Endothelial cell of umbilical vein (primary cell): ENCODE measurements at regions of chr1 and their contacts with region 1.

Region 1: DNA sequence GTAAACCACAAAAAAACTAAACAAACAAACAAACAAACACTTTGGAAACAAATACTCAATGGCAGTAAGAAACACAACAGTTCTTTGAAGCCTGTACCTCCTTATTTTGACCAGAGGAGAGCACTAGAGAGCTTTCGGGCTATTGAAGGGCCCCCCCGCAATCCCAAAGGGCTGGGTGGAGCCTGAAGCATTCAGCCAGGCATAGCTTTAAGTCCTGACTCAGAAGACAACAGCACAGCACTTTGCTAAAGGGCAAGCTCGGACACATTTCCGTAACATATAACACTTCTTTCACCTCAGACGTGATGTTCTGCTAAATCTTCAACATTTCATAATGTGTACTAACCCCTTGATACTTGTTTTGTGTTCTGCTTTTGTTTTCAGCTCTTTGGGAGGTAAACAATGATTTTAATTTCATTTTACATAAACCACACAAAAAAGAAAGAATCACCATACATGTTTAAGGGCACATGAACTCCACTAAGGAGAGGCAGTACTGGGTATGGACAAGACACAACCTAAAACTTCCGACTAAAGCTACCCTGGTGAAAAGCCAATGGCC is 9.7 kb upstream of the SHCBP1L start:
- DNase-seq: peak; percentile 91
- H3K4me3 ChIP-seq: peak overlapping the region in 2 of 3 experiments; percentile 7 to 60
- H3K27ac ChIP-seq: peak overlapping the region; percentile 73
- H3K4me1 ChIP-seq: peaks cover 6% of the 10 kb centered on the region
- H3K27me3 ChIP-seq: no peaks in the 10 kb centered on the region
- CTCF ChIP-seq: peak; percentile 83 to 86
- POLR2A ChIP-seq: peak; percentile 63

Region 2: GRCh38 chr1:183023601-183024316 is 61.1 kb after region 1 on chr1:
- CTCF ChIA-PET with region 1: interaction called, 49 read pairs
- POLR2A ChIA-PET with region 1: interaction called, 4 read pairs
- dilution Hi-C with region 1: no loop called
- intact Hi-C with region 1: loop called (anchors 1 kb)
- DNase-seq: peak; percentile 78
- H3K4me3 ChIP-seq: peak overlapping the region; percentile 71 to 96 (median 96)
- H3K27ac ChIP-seq: peak overlapping the region; percentile 68
- H3K4me1 ChIP-seq: peaks cover 44% of the 10 kb centered on the region
- H3K27me3 ChIP-seq: no peaks in the 10 kb centered on the region
- CTCF ChIP-seq: peak; percentile 41 to 76
- POLR2A ChIP-seq: no peak

Region 3: DNA sequence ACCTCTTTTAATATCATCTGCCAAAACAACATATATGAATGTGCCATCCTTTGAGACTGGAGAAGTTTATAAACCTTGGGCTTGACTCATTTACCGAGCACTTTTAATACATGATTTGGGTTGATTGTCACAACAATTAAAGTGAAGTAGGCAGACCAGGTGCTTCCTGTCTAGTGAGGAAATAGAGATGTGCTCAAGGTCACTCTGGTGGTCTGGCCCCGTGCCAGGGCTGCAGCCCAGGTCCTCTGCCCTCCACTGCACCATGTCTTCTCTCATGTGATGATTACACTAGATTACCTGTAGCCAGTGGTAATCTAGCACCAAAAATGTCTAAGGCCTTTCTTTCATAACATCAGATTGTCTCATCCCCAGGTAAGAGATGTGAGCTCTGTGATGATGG is 161.6 kb after region 1 on chr1:
- CTCF ChIA-PET with region 1: interaction called, 13 read pairs
- POLR2A ChIA-PET with region 1: no interaction called
- dilution Hi-C with region 1: no loop called
- intact Hi-C with region 1: loop called (anchors 1 kb)
- DNase-seq: peak; percentile 55
- H3K4me3 ChIP-seq: no peak overlapping the region
- H3K27ac ChIP-seq: peak overlapping the region; percentile 19
- H3K4me1 ChIP-seq: peaks cover 10% of the 10 kb centered on the region
- H3K27me3 ChIP-seq: no peaks in the 10 kb centered on the region
- CTCF ChIP-seq: no peak
- POLR2A ChIP-seq: no peak

Region 4: GRCh38 chr1:183227963-183228649 is 265.5 kb after region 1 on chr1:
- CTCF ChIA-PET with region 1: interaction called, 47 read pairs
- POLR2A ChIA-PET with region 1: no interaction called
- dilution Hi-C with region 1: no loop called
- intact Hi-C with region 1: loop called (anchors 1 kb)
- DNase-seq: peak; percentile 54
- H3K4me3 ChIP-seq: no peak overlapping the region
- H3K27ac ChIP-seq: no peak overlapping the region
- H3K4me1 ChIP-seq: peaks cover 13% of the 10 kb centered on the region
- H3K27me3 ChIP-seq: no peaks in the 10 kb centered on the region
- CTCF ChIP-seq: peak; percentile 80 to 87
- POLR2A ChIP-seq: no peak

Region 5: DNA sequence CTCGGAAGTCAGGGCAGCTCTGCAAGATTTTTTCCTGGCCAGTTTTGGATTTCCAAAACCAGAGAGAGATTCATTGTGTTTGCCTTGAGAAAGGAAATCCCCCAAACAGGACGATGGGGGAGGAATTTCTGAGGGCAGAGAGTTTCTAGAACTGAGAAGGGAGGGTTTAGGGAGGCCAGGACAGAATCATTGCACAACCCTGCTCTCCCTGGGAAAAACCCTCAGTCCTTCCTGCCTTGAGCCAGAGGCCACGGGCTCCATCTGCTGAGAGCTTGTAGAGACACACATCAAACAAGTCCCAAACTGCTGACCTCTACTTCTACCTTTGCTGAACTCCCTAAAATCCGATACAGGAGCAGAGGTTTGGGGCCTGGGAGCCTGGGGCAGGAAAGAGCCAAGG is 355.8 kb after region 1 on chr1:
- CTCF ChIA-PET with region 1: interaction called, 24 read pairs
- POLR2A ChIA-PET with region 1: no interaction called
- dilution Hi-C with region 1: no loop called
- intact Hi-C with region 1: loop called (anchors 5 kb)
- DNase-seq: peak; percentile 61
- H3K4me3 ChIP-seq: no peak overlapping the region
- H3K27ac ChIP-seq: no peak overlapping the region
- H3K4me1 ChIP-seq: no peaks in the 10 kb centered on the region
- H3K27me3 ChIP-seq: peaks cover 0 to 4% of the 10 kb centered on the region in 2 experiments
- CTCF ChIP-seq: peak; percentile 6 to 53
- POLR2A ChIP-seq: no peak

Region 6: DNA sequence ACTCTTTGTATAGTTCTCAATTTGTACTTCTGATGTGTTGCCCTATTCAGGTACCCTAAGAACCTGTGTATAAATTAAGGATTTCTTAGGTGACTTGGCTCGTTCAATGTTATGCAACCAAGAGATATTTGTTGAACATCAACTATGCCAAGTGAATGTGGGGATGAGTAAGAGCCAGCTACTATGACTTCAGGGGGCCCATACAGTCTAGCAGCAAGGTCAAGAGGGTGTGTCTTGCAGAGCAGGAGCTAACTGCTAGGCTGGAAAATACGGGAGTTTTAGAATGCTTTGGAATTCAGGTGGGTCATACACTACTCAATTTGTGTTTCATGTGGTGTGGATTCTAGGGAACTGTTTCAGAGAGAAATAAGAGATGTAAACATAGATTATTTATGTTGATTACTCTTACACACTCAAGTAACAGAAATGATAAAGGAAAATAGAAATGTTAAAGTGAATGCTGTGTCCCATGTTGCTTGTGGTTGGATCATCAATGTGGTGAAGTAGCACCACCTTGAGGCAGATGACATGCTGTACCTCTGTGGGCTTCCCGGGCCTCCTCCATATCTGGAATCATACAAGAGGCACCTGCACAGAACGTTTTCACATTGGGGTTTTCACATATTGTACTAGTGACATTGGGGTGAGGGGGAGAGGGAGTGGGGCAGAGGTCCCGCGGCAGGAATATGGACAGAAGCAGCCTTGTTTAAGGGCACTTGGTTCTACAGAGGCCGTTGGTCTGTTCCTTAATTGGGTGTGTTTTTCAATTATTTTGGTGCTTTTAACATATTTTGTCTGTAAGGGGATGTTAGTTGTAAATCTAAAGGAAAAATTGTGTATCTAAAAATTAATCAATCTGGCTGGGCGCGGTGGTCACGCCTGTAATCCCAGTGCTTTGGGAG is 660.5 kb after region 1 on chr1:
- CTCF ChIA-PET with region 1: interaction called, 3 read pairs
- POLR2A ChIA-PET with region 1: no interaction called
- dilution Hi-C with region 1: no loop called
- intact Hi-C with region 1: loop called (anchors 1 kb)
- DNase-seq: peak; percentile 56
- H3K4me3 ChIP-seq: no peak overlapping the region
- H3K27ac ChIP-seq: no peak overlapping the region
- H3K4me1 ChIP-seq: peaks cover 4% of the 10 kb centered on the region
- H3K27me3 ChIP-seq: no peaks in the 10 kb centered on the region
- CTCF ChIP-seq: peak; percentile 34 to 45
- POLR2A ChIP-seq: no peak